ENCODE measurements at regions of chr3 and their contacts with region 1.

Region 1: GRCh38 chr3:88219138-88219792 is 69.5 kb downstream of the C3orf38 start:
- DNase-seq: peak; percentile 56
- CTCF ChIP-seq: peak; percentile 57

Region 2: DNA sequence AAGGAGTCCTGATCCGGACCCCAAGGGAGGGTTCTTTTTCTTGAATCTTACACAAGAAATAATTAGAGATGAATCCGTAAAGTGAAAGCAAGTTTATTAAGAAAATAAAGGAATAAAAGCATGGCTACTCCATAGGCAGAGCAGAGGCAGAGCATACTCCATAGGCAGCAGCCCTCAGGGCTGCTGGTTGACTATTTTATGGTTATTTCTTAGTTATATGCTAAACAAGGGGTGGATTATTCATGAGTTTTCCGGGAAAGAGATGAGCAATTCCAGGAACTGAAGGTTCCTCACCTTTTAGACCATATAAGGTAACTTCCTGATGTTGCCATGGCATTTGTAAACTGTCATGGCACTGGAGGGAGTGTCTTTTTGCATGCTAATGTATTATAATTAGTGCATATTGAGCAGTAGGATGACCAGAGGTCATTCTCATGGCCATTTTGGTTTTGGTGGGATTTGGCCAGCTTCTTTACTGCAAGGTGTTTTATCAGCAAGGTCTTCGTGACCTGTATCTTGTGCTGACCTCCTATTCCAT is 27.3 kb before region 1 on chr3:
- CTCF ChIA-PET with region 1: no interaction called
- POLR2A ChIA-PET with region 1: no interaction called
- DNase-seq: no peak
- CTCF ChIP-seq: no peak

Region 3: DNA sequence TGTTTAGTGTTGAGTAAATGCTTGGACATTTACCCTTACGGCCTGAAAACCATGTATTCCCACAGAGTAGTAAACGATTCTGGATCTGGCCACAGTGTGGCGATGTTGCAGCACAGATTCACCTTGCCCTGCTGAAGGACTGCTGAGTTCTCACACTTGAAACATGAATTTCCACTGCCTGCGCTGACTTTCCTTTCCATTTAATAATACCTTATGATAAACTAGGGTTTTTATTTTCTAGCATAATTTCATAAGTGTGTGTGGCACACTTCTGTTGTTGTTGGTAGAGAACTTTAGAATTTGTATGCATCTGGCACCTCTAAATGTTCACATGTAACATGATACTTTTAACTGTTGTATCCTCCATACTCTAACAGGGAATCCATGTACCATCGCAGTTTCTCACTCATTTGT is 15.6 kb before region 1 on chr3:
- CTCF ChIA-PET with region 1: interaction called, 16 read pairs
- POLR2A ChIA-PET with region 1: no interaction called
- DNase-seq: peak; percentile 51
- CTCF ChIP-seq: peak; percentile 87

Region 4: DNA sequence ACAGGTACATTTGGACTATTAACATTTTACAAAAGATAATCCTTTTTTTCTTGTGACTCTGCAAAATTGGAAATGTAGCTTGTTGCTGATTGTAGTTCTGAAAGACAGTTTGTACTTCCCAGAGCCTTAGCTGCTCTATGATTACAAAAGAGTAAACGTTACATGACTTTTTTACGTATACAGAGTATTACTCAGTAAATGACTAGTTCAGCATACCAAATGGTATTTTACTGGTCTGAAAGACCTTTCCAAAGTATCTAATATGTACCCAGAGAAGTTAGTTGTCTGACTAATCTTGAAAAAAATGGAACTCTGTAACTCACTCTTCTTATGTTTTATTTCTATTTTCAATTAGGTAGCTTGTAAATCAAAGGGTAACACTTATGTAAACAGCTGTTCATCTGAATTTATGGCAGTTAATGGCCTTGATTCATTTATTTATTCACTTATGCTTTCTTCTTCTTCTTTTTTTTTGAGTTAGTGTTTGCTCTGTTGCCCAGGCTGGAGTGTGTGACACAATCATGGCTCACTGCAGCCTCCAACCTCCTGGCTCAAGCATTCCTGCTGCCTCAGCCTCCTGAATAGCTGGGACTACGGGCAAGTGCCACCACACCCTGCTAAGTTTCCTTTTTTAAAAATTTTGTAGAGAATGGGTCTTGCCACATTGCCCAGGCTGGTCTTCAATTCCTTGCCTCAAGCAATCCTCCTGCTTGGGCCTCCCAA is 82.2 kb after region 1 on chr3:
- CTCF ChIA-PET with region 1: no interaction called
- POLR2A ChIA-PET with region 1: no interaction called
- DNase-seq: no peak
- CTCF ChIP-seq: no peak

Region 5: GRCh38 chr3:88369337-88369736 is 150.1 kb after region 1 on chr3:
- CTCF ChIA-PET with region 1: no interaction called
- POLR2A ChIA-PET with region 1: no interaction called
- DNase-seq: no peak
- CTCF ChIP-seq: no peak

Region 6: GRCh38 chr3:89098964-89099585 is 879.8 kb after region 1 on chr3:
- CTCF ChIA-PET with region 1: interaction called, 10 read pairs
- POLR2A ChIA-PET with region 1: no interaction called
- DNase-seq: peak; percentile 29
- CTCF ChIP-seq: peak; percentile 92

Measured in GM10248 (cell line).